HEK293 (cell line): ENCODE measurements at regions of chr18 and their contacts with region 1.

Region 1: GRCh38 chr18:59249205-59249774 is 24.0 kb downstream of the RAX start:
- H3K4me3 ChIP-seq: no peak overlapping the region
- H3K27ac ChIP-seq: no peak overlapping the region
- H3K4me1 ChIP-seq: no peaks in the 10 kb centered on the region; the same call in 1 of the 2 replicates
- CTCF ChIP-seq: peak; percentile 48; the same call in 1 of the 2 replicates

Region 2: GRCh38 chr18:58980991-58981390 is 268.3 kb before region 1 on chr18:
- CTCF ChIA-PET with region 1: no interaction called
- POLR2A ChIA-PET with region 1: no interaction called
- H3K4me3 ChIP-seq: no peak overlapping the region
- H3K27ac ChIP-seq: no peak overlapping the region
- H3K4me1 ChIP-seq: no peaks in the 10 kb centered on the region
- CTCF ChIP-seq: no peak

Region 3: GRCh38 chr18:59228351-59228750 is 20.9 kb before region 1 on chr18:
- CTCF ChIA-PET with region 1: interaction called, 26 read pairs
- POLR2A ChIA-PET with region 1: no interaction called
- H3K4me3 ChIP-seq: no peak overlapping the region
- H3K27ac ChIP-seq: no peak overlapping the region
- H3K4me1 ChIP-seq: peaks cover 3% of the 10 kb centered on the region; the same call in 1 of the 2 replicates
- CTCF ChIP-seq: no peak

Region 4: DNA sequence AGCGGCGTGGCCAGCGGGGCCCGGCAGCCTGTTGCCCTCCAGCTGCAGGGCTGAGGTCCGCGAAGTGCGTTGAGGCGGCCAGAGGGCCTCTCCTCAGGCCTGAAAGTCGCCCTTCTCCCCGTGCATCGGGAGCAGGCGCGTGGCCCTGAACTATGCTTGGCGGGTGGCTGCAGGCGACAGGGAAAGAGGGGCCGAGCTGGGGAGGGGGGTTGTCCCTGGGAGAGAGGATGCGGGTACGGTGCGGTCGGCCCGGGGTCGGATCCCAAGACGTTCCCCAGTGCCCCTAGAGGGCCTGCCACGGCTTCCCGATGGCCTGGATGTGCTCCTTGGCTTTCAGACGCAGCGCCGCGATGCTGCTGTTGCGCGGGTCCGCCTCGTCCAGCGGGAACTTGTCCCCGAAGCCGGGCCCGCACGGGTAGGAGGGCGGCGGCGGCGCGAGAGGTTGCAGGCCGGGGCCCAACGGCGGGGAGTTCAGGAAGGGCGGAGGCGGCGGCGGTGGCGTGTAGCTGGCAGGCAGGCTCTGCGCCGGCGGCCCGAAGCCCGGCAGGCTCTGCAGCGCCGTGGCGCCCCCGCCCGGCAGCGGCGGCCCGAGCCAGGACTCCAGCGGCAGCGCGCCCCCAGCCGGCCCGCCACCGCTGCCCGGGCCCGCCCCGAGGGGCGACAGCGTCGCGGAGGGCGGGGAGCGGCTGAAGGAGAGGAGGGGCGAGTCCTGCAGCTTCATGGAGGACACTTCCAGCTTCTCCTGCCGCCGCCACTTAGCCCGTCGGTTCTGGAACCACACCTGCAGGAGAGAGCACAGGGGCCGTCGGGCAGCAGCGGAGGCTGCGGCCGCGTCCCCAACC is 19.7 kb after region 1 on chr18:
- CTCF ChIA-PET with region 1: interaction called, 40 read pairs
- POLR2A ChIA-PET with region 1: no interaction called
- H3K4me3 ChIP-seq: no peak overlapping the region
- H3K27ac ChIP-seq: no peak overlapping the region
- H3K4me1 ChIP-seq: peaks cover 6% of the 10 kb centered on the region; the same call in 1 of the 2 replicates
- CTCF ChIP-seq: no peak

Region 5: DNA sequence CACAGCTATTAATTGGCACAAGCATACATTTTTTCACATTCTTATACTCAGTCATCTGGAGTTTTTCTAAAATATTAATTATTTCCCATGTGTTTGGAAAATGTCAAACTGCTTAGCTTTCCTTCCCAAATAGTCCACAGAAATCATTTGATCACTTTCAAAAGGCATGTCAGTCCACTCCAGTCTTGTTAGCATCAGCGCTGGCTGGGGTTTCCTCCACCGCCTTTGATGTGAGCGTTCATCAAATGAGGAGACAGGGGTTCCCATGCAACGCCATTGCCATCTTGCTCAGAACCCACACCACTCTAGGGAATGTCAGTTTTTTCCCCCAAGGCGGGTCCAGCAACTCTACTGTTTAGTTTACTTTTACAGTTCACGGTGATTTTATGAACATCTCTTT is 37.1 kb after region 1 on chr18:
- CTCF ChIA-PET with region 1: interaction called, 12 read pairs
- POLR2A ChIA-PET with region 1: no interaction called
- H3K4me3 ChIP-seq: no peak overlapping the region
- H3K27ac ChIP-seq: no peak overlapping the region
- H3K4me1 ChIP-seq: no peaks in the 10 kb centered on the region
- CTCF ChIP-seq: no peak

Region 6: DNA sequence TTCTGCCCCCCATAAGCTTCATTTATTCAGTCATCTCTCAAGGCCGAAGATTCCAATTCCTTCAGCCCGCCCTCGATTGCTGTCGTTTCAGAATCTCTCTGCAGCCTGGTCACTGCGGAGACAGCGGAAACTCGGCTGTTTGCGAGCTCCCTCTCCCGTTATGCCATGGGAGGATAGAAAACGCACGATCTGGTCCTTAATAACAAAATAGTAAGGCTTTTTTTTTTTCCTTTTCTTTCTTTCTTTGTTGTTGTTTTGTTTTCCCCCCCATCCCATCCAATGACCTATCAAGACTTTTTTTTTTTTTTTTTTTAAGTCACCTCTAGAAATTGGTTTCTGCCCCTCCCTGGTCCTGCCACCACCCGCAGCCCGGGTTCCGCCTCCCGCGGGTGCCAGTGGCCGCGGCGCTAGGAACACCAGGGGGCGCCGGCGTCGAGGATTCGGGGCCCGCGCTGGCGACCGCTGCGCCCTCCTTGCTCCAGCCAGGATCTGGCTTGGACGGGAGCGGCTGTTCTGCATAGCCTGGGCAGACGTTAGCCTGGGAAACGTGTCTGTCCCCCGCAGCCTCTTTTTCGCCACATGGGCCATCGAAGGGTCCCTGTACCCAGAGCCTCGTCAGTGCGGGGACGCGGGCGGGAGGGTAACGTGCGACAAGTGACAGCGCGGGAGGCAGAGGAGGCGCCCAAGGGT is 59.1 kb after region 1 on chr18:
- CTCF ChIA-PET with region 1: interaction called, 36 read pairs
- POLR2A ChIA-PET with region 1: no interaction called
- H3K4me3 ChIP-seq: peak overlapping the region; percentile 41
- H3K27ac ChIP-seq: no peak overlapping the region
- H3K4me1 ChIP-seq: peaks cover 5% of the 10 kb centered on the region
- CTCF ChIP-seq: peak; percentile 94

Region 7: DNA sequence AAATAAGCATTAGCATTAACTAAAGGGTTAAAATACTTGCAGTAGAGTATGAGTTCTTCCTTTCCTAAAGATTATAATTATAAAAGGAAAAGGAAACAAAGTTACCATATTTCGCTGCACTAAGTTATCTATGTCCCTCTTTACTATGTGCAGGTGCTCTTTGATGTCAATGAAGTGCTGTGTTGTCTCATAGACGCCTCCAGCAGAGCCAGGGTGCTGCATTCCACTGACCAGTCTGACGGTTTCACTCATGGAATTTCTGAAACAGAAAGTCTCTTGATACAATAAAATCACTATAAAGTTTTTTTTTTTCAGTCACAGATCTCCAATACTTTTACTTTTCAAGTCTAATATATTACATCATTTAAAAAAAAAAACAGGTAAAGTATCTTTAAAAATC is 83.7 kb after region 1 on chr18:
- CTCF ChIA-PET with region 1: interaction called, 11 read pairs
- POLR2A ChIA-PET with region 1: no interaction called
- H3K4me3 ChIP-seq: no peak overlapping the region
- H3K27ac ChIP-seq: no peak overlapping the region
- H3K4me1 ChIP-seq: no peaks in the 10 kb centered on the region
- CTCF ChIP-seq: no peak

Region 8: GRCh38 chr18:59387687-59388565 is 138.6 kb after region 1 on chr18:
- CTCF ChIA-PET with region 1: interaction called, 12 read pairs
- POLR2A ChIA-PET with region 1: no interaction called
- H3K4me3 ChIP-seq: no peak overlapping the region
- H3K27ac ChIP-seq: no peak overlapping the region; the same call in 1 of the 2 replicates
- H3K4me1 ChIP-seq: peaks cover 13% of the 10 kb centered on the region
- CTCF ChIP-seq: no peak